ENCODE measurements at regions of chr7 and their contacts with region 1.

Region 1: GRCh38 chr7:1175967-1176851 is 16.2 kb upstream of the ZFAND2A start:
- DNase-seq: peak; percentile 49 to 96 (median 79)
- ATAC-seq: peak; percentile 96
- H3K4me3 ChIP-seq: no peak overlapping the region
- H3K27ac ChIP-seq: no peak overlapping the region
- H3K4me1 ChIP-seq: peaks cover 0 to 17% of the 10 kb centered on the region in 2 donors
- H3K27me3 ChIP-seq: peaks cover 0 to 20% of the 10 kb centered on the region in 2 donors
- CTCF ChIP-seq: peak; percentile 86 to 93

Region 2: DNA sequence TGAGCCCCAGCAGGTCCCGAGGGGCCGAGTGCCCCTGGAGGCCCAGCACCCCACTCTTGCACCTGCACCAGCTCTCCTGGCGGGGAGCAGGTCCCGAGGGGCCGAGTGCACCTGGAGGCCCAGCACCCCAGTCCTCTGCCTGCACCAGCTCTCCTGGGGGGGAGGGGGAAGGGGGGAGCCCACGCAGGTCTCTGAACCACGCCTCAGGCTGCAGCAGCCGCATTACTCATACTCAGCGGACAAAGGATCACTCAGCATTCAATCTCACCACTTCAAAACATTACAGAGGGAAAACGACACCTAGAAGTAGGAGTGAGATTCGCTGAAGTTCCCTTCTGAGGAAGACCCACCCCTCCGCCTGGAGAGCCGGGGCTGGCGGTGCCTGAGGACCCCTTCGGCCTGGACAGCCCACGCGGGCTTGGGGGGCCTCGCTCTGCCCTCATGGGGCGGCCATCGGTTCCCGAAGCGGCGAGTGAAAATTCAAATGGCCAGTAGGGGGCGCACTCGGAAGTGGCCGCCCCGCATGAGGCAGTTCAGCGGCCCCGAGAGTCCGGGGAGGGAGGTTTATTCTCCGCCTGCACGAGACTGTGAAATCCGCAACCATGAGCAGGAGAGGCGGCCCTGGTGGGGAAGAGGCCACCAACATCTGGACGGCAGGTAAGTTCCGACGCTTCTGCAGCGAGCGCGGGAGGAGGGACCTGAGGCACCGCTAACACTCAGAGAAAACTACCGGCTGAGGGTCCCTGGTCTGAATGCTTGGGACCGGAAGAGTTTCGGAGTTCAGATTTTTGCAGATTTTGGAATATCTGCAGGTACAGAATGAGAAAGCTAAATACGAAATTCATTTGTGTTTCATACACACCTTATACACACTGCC is 89.4 kb before region 1 on chr7:
- intact Hi-C with region 1: loop called in 1 of 2 experiments (anchors 10 kb)
- DNase-seq: peak; percentile 53 to 90 (median 64)
- ATAC-seq: peak; percentile 89
- H3K4me3 ChIP-seq: peak overlapping the region; percentile 23 to 41
- H3K27ac ChIP-seq: peak overlapping the region; percentile 34 to 65
- H3K4me1 ChIP-seq: peaks cover 14 to 59% of the 10 kb centered on the region in 2 donors
- H3K27me3 ChIP-seq: no peaks in the 10 kb centered on the region
- CTCF ChIP-seq: peak; percentile 76 to 92

Region 3: GRCh38 chr7:1112109-1112508 is 64.1 kb before region 1 on chr7:
- intact Hi-C with region 1: no loop called
- DNase-seq: peak in 1 of 4 donors; percentile 68
- ATAC-seq: no peak
- H3K4me3 ChIP-seq: no peak overlapping the region
- H3K27ac ChIP-seq: no peak overlapping the region
- H3K4me1 ChIP-seq: no peaks in the 10 kb centered on the region
- H3K27me3 ChIP-seq: no peaks in the 10 kb centered on the region
- CTCF ChIP-seq: no peak

Measured in left lung (tissue), 14 donors.